Head of caudate nucleus (tissue), 42 donors: ENCODE measurements at regions of chr5 and their contacts with region 1.

Region 1: DNA sequence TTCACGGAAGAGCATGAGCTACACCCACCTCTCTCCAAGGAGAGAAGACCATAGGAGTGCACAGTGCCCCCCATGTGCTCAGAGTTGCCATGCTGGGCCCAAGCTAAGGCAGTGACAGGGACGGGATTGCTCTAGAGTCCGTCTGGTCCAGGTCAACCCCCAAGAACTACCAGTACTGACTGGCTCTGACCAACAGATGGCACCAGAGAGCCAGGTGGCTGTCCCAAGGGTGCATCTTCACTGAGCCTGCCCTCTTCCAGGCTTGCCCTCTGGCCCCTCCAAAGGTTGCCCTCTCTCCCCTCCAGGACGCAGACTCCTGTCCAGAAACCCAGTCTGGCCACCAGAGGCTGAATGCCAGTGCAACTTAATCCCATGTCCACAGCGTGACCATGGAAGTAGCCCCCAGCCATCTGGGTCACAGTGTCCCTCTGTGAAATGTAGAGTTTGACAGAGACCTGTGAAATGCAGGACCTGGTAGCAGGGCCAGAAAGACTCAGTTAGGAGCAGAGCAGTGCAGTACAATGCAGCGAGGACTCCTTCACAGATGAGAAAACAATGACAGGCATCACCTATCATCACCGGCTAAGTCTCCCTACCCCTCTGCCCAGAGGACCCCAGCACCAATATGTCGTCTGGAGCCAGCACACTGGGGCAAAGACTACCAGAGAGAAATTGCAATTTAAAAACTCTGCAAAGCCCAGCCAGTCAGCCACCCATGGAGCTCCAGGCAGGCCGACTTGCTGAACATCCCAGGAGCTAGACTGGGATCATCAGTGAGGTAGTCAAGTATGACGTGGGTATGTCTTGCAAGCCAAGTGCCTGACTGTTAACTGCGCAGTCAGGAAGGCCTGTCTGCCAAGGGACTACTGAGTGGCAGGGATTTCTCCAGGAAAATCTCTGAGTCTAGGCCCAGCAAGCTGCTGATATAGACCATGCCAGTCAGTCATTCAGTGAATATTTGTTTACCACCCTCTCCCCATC is 7.7 kb upstream of the SKP1 start:
- DNase-seq: peak; percentile 37 to 89 (median 76)

Region 2: DNA sequence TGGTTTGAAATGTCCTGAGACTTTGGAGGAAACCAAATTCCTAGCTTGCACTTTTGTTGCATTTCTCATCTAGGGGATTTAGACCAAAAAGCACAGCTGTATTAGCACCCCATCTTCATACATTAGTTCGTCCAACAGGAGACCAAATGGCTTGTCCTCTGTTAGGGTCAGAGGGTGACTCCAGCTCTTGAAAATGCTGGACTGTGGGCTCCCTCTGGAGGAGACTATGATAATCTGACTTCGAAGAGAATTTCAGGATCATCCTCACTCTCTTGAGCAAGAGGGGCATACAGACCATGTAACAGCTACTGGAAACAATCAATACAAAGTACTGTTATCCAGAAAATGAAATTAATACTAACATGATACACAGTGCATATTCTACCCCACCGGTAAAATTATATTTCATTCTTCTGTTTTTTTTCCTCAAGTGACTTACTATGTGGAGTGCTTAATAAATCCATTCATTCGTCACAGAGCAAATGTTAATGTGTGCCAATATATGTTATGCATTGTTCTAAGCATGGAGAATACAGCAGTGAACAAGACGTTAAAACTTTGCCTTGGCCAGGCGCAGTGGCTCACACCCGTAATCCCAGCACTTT is 105.2 kb after region 1 on chr5:
- intact Hi-C with region 1: loop called (anchors 5 kb)
- DNase-seq: peak in 37 of 42 donors; percentile 10 to 84 (median 60)

Region 3: DNA sequence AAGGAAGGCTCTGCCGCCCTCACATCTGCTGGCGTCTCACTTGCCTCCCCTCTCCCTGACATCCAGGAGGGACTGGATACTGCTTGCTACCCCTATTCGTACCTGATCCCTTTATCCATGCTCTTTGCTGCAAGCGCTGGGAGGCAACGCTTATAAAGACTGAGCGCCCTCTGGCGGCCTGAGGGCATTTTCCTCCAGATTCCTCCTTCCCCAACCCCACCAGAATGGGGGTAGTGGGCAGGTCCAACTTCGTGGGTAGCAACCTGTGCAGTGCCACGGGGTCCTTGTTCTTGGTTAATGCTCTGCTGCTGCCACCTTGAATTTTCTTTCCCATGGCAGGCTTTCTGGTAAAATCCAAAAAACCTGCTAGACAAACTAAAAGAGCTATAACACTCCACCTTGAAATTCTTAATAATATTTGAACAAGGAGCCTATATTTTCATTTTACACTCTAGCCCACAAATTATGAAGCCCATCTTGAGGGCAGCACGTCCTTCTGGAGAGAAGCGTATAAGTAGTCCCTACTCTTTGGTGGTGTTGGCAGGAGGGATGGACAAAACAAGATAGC is 393.4 kb after region 1 on chr5:
- intact Hi-C with region 1: loop called (anchors 10 kb)
- DNase-seq: peak; percentile 69 to 94 (median 86)